ENCODE measurements at regions of chr12 and their contacts with region 1.

Region 1: DNA sequence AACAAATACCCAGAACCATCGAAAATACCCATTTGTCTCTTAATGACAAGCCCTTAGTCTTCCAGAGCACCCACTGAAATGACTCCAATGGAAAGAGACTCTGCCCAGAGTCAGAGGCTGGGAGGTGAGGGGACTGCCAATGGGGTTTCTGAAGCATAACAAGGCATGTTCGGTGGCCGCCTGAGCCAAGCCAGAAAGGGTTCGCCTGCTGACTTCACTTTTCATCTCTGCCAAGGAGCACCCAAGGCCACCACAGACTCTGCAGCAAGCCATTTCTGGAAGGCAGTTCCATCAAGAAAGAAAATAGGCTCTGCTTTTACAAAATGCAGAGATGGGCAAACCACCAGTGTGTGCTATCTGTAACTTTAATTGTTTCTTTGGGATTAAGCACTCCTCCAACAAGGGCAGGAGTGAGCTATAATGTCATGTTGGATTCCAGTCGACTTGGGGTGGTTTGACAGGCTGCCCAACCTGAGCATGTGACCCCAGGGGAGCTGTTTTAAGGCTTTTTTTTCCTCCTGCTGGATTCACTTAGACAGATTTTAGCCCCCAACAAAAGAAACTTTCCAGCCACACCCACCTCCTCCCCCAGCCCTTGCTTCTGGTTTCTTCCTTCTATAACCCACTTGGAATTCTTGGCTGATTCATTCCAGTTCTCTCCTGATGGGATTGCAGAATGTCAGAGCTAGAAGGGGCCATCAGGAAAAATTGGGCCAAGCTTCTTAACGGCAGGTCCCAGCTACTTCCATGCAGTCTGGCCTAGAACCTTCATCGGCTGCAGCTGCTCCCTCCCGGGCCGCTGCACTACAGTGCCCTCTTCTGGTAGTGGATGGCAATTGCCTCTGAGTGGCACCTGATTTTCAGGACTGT is 24.1 kb downstream of the CKAP4 start:
- DNase-seq: peak; percentile 54
- ATAC-seq: peak; percentile 96
- H3K4me3 ChIP-seq: no peak overlapping the region
- H3K27ac ChIP-seq: no peak overlapping the region
- H3K4me1 ChIP-seq: no peaks in the 10 kb centered on the region
- H3K27me3 ChIP-seq: peaks cover 11% of the 10 kb centered on the region
- CTCF ChIP-seq: peak; percentile 93
- POLR2A ChIP-seq: 0 out of 2 replicates have a peak, but pooled peaks have one; percentile 28
- RAD21 ChIP-seq: peak; percentile 95

Region 2: GRCh38 chr12:105705765-105706164 is 518.0 kb before region 1 on chr12:
- CTCF ChIA-PET with region 1: no interaction called
- POLR2A ChIA-PET with region 1: no interaction called
- dilution Hi-C with region 1: no loop called
- in situ Hi-C with region 1: no loop called
- intact Hi-C with region 1: loop called (anchors 1 kb)
- DNase-seq: peak; percentile 67
- ATAC-seq: peak; percentile 85
- H3K4me3 ChIP-seq: no peak overlapping the region
- H3K27ac ChIP-seq: no peak overlapping the region
- H3K4me1 ChIP-seq: peaks cover 5% of the 10 kb centered on the region; the same call in 1 of the 2 replicates
- H3K27me3 ChIP-seq: peaks cover 6% of the 10 kb centered on the region
- CTCF ChIP-seq: peak; percentile 85
- POLR2A ChIP-seq: no peak
- RAD21 ChIP-seq: peak; percentile 79

Region 3: DNA sequence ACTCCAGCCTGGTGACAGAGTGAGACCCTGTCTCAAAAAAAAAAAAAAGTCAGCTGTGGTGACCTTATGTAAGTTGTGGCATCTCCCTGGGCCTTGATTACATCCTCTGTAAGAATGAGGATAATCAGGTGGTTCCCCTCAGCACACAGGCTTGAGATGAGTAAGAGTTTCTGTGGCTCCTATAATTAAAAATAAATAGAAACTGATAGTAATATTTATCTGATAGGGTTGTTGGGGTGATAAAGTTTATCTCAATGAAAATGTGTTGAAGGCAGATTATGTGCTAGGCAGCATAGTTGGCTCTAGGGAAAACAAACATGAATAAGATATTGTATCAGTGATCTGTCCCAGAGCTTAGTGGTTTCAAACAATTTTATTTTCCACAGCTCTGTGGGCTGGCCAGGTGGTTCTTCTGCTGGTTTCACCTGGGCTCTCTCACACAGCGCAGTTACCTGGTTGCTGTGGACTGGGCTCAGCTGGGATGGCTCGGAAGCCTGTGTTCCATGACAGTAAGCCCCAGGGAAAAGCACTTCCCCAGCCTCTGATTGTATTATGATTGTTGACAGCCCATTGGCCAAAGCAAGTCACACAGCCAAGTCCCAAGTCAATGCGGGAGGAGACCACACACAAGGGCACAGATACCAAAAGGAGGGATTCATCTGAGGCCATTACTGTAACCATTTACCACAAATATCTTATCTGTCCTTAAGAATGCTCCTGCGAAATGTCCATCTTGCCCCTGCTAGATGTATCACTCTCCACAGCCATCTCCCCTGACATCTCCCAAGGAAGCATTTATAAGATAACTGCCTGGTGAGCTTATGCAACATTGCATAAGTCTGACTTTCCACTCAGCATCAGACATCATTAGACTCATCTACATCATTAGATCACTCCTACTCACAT is 236.7 kb before region 1 on chr12:
- CTCF ChIA-PET with region 1: no interaction called
- POLR2A ChIA-PET with region 1: no interaction called
- dilution Hi-C with region 1: no loop called
- in situ Hi-C with region 1: no loop called
- intact Hi-C with region 1: no loop called
- DNase-seq: peak; percentile 95
- ATAC-seq: peak; percentile 75
- H3K4me3 ChIP-seq: no peak overlapping the region
- H3K27ac ChIP-seq: peak overlapping the region; percentile 89
- H3K4me1 ChIP-seq: peaks cover 20% of the 10 kb centered on the region
- H3K27me3 ChIP-seq: no peaks in the 10 kb centered on the region
- CTCF ChIP-seq: no peak
- POLR2A ChIP-seq: no peak; the same call in 1 of the 2 replicates
- RAD21 ChIP-seq: 0 out of 2 replicates have a peak, but pooled peaks have one; percentile 3

Region 4: GRCh38 chr12:106269150-106269771 is 45.5 kb after region 1 on chr12:
- CTCF ChIA-PET with region 1: no interaction called
- POLR2A ChIA-PET with region 1: no interaction called
- dilution Hi-C with region 1: no loop called
- in situ Hi-C with region 1: no loop called
- intact Hi-C with region 1: no loop called
- DNase-seq: no peak
- ATAC-seq: no peak
- H3K4me3 ChIP-seq: no peak overlapping the region
- H3K27ac ChIP-seq: no peak overlapping the region
- H3K4me1 ChIP-seq: no peaks in the 10 kb centered on the region
- H3K27me3 ChIP-seq: peaks cover 1% of the 10 kb centered on the region; the same call in 1 of the 2 replicates
- CTCF ChIP-seq: no peak
- POLR2A ChIP-seq: no peak
- RAD21 ChIP-seq: no peak

Region 5: GRCh38 chr12:106282457-106283097 is 58.9 kb after region 1 on chr12:
- CTCF ChIA-PET with region 1: interaction called, 8 read pairs
- POLR2A ChIA-PET with region 1: interaction called, 3 read pairs
- dilution Hi-C with region 1: no loop called
- in situ Hi-C with region 1: no loop called
- intact Hi-C with region 1: loop called (anchors 1 kb)
- DNase-seq: peak; percentile 55
- ATAC-seq: peak; percentile 46; the same call in 1 of the 2 replicates
- H3K4me3 ChIP-seq: no peak overlapping the region
- H3K27ac ChIP-seq: no peak overlapping the region
- H3K4me1 ChIP-seq: no peaks in the 10 kb centered on the region
- H3K27me3 ChIP-seq: peaks cover 8% of the 10 kb centered on the region
- CTCF ChIP-seq: peak; percentile 66
- POLR2A ChIP-seq: no peak
- RAD21 ChIP-seq: peak; percentile 67

Region 6: GRCh38 chr12:106357549-106358395 is 134.1 kb after region 1 on chr12 and contains the start of gene POLR3B:
- CTCF ChIA-PET with region 1: interaction called, 12 read pairs
- POLR2A ChIA-PET with region 1: no interaction called
- dilution Hi-C with region 1: no loop called
- in situ Hi-C with region 1: no loop called
- intact Hi-C with region 1: loop called (anchors 1 kb)
- DNase-seq: peak; percentile 96
- ATAC-seq: peak; percentile 90
- H3K4me3 ChIP-seq: peak within 1 kb of the TSS; percentile 71
- H3K27ac ChIP-seq: peak within 1 kb of the TSS; percentile 91
- H3K4me1 ChIP-seq: peaks cover 3% of the 10 kb centered on the region; the same call in 1 of the 2 replicates
- H3K27me3 ChIP-seq: no peaks in the 10 kb centered on the region
- CTCF ChIP-seq: peak; percentile 94
- POLR2A ChIP-seq: peak; percentile 59
- RAD21 ChIP-seq: peak; percentile 73
- total RNA-seq, gene POLR3B: 15.4 and 20.0 TPM in 2 replicates

Region 7: GRCh38 chr12:107200394-107200793 is 976.7 kb after region 1 on chr12:
- CTCF ChIA-PET with region 1: no interaction called
- POLR2A ChIA-PET with region 1: no interaction called
- dilution Hi-C with region 1: no loop called
- in situ Hi-C with region 1: no loop called
- intact Hi-C with region 1: no loop called
- DNase-seq: peak; percentile 87
- ATAC-seq: peak; percentile 91
- H3K4me3 ChIP-seq: no peak overlapping the region
- H3K27ac ChIP-seq: no peak overlapping the region
- H3K4me1 ChIP-seq: peaks cover 5% of the 10 kb centered on the region; the same call in 1 of the 2 replicates
- H3K27me3 ChIP-seq: no peaks in the 10 kb centered on the region
- CTCF ChIP-seq: no peak
- POLR2A ChIP-seq: no peak
- RAD21 ChIP-seq: no peak

Measured in IMR-90 (cell line).